Activated CD4-positive, alpha-beta memory T cell treated with anti-CD3 and anti-CD28 coated beads for 36 hours (primary cell): ENCODE measurements at regions of chr3 and their contacts with region 1.

Region 1: GRCh38 chr3:69324362-69325025 is 61.4 kb downstream of the FRMD4B start:
- DNase-seq: no peak
- H3K4me3 Mint-ChIP-seq: no peak overlapping the region
- H3K27ac Mint-ChIP-seq: no peak overlapping the region
- H3K4me1 Mint-ChIP-seq: peaks cover 47% of the 10 kb centered on the region
- H3K27me3 Mint-ChIP-seq: no peaks in the 10 kb centered on the region

Region 2: DNA sequence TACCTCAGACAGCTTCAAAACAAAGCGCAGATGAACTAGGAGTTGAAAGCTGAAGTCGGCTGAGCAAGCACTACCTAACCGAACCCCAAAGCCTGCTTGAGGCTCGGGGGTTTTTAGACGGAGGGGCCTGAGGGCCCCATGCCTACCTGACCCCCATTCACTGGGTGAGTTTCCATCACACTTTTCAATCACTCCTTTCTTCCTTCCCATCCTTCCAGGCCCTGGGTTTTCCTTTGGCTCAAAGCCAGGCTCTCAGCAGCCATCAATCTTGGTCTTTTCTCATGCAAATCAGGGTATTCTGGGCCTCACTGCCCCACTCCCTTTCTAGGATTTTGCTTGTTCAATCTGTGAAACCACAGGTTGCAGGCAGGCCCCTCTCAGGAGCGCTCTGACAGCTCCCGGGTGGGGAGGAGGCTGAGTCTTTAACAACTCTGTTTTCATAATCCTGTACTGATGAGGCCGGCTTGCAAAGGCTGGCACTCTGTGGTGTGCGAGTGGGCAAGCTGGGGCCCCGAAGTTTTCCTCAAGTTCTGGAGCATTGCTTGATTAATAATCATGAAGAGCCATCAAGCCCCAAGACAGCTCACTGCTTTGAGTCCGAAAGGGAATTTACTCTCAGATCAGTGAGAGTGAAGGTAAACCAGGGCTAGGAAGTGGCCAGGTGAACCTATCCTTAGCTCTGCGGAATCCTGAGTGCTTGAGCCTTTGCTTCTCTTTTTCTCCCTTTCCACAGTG is 36.2 kb before region 1 on chr3:
- CTCF ChIA-PET with region 1: no interaction called
- POLR2A ChIA-PET with region 1: interaction called, 3 read pairs
- intact Hi-C with region 1: loop called (anchors 2 kb)
- DNase-seq: peak; percentile 86
- H3K4me3 Mint-ChIP-seq: peak overlapping the region; percentile 31
- H3K27ac Mint-ChIP-seq: peak overlapping the region; percentile 61
- H3K4me1 Mint-ChIP-seq: peaks cover 29% of the 10 kb centered on the region
- H3K27me3 Mint-ChIP-seq: no peaks in the 10 kb centered on the region

Region 3: GRCh38 chr3:69299361-69299760 is 25.1 kb before region 1 on chr3:
- CTCF ChIA-PET with region 1: no interaction called
- POLR2A ChIA-PET with region 1: no interaction called
- intact Hi-C with region 1: no loop called
- DNase-seq: no peak
- H3K4me3 Mint-ChIP-seq: no peak overlapping the region
- H3K27ac Mint-ChIP-seq: no peak overlapping the region
- H3K4me1 Mint-ChIP-seq: peaks cover 2% of the 10 kb centered on the region
- H3K27me3 Mint-ChIP-seq: peaks cover 3% of the 10 kb centered on the region

Region 4: DNA sequence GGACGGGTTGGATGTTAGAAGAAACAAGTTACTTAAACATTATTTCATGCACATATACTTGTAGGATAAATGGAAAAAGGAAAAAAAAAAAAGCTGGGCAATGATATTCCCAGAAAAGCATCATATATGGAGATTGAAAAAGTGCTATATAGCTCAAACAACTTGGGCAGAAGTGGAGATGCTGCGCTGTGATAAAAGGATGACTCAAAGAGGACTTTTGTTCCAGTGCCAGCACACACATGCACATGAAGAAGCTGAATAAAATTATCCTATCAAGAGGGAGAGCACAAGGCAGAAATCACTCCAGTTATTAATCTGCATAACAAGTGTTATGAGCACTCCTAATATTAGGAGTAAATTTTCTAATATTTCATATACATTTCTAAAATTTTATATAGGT is 30.5 kb after region 1 on chr3:
- CTCF ChIA-PET with region 1: interaction called, 3 read pairs
- POLR2A ChIA-PET with region 1: no interaction called
- intact Hi-C with region 1: loop called (anchors 2 kb)
- DNase-seq: no peak
- H3K4me3 Mint-ChIP-seq: no peak overlapping the region
- H3K27ac Mint-ChIP-seq: no peak overlapping the region
- H3K4me1 Mint-ChIP-seq: peaks cover 16% of the 10 kb centered on the region
- H3K27me3 Mint-ChIP-seq: peaks cover 10% of the 10 kb centered on the region

Region 5: DNA sequence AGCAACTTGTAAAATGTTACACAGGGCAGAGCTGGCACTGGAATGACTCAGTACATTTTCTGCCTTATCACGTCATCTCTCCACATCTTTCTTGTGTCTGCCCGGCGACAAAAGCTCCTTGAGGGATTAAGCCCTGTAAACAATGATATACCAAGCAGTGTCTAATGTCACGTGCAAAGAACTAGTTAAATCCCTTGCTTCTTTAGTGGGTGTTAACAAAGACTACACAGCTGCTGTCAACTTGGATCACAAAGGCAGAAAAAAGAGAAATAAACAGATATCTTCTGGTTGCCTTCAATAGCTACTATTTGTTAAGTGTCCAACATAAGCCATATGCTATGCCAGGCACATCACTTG is 109.5 kb after region 1 on chr3:
- CTCF ChIA-PET with region 1: interaction called, 4 read pairs
- POLR2A ChIA-PET with region 1: no interaction called
- intact Hi-C with region 1: loop called (anchors 1 kb)
- DNase-seq: peak; percentile 38
- H3K4me3 Mint-ChIP-seq: no peak overlapping the region
- H3K27ac Mint-ChIP-seq: peak overlapping the region; percentile 66
- H3K4me1 Mint-ChIP-seq: peaks cover 47% of the 10 kb centered on the region
- H3K27me3 Mint-ChIP-seq: peaks cover 26% of the 10 kb centered on the region

Region 6: GRCh38 chr3:69671082-69671952 is 346.8 kb after region 1 on chr3:
- CTCF ChIA-PET with region 1: interaction called, 3 read pairs
- POLR2A ChIA-PET with region 1: no interaction called
- intact Hi-C with region 1: loop called (anchors 1 kb)
- DNase-seq: no peak
- H3K4me3 Mint-ChIP-seq: no peak overlapping the region
- H3K27ac Mint-ChIP-seq: no peak overlapping the region
- H3K4me1 Mint-ChIP-seq: no peaks in the 10 kb centered on the region
- H3K27me3 Mint-ChIP-seq: no peaks in the 10 kb centered on the region